CD4-positive, alpha-beta T cell (primary cell): ENCODE measurements at regions of chr17 and their contacts with region 1.

Region 1: DNA sequence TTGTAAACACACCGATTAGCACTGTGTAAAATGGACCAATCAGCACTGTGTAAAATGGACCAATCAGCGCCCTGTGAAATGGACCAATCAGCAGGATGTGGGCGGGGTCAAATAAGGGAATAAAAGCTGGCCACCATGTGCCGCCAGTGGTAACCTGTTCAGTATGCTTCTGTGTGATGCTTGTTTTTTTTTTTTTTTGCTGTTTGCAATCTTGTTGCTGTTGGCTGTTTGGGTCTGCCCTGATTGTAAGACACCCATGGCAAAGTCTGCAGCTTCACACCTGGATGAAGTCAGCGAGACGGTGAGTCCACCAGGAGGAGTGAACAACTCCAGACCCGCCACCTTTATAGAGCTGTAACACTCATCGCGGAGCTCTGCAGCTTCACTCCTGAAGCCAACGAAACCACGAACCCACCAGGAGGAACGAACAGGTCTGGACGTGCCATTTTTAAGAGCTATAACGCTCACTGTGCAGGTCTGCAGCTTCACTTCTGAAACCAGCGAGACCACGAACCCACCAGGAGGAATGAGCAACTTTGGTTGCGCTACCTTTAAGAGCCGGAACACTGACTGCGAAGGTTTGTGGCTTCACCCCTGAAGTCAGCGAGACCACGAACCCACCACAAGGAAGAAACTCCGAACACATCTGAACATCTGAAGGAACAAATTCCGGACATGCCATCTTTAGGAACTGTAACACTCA is 85.0 kb upstream of the MED9 start:
- DNase-seq: peak; percentile 37 to 89 (median 60)
- ATAC-seq: peak; percentile 88
- H3K4me3 ChIP-seq: peak overlapping the region; percentile 63
- H3K4me3 Mint-ChIP-seq: peak overlapping the region; percentile 91
- H3K27ac ChIP-seq: peak overlapping the region; percentile 25 to 40
- H3K27ac Mint-ChIP-seq: peak overlapping the region; percentile 87
- H3K4me1 ChIP-seq: peaks cover 21% of the 10 kb centered on the region
- H3K4me1 Mint-ChIP-seq: peaks cover 26% of the 10 kb centered on the region
- H3K27me3 ChIP-seq: no peaks in the 10 kb centered on the region
- H3K27me3 Mint-ChIP-seq: no peaks in the 10 kb centered on the region
- CTCF ChIP-seq: no peak

Region 2: GRCh38 chr17:17403899-17404576 is 12.2 kb after region 1 on chr17:
- CTCF ChIA-PET with region 1: no interaction called
- POLR2A ChIA-PET with region 1: interaction called, 25 read pairs
- intact Hi-C with region 1: no loop called
- DNase-seq: peak; percentile 22 to 80 (median 63)
- ATAC-seq: peak; percentile 98
- H3K4me3 ChIP-seq: peak overlapping the region; percentile 22
- H3K4me3 Mint-ChIP-seq: peak overlapping the region; percentile 63
- H3K27ac ChIP-seq: peak overlapping the region; percentile 70 to 77
- H3K27ac Mint-ChIP-seq: peak overlapping the region; percentile 88
- H3K4me1 ChIP-seq: peaks cover 49% of the 10 kb centered on the region
- H3K4me1 Mint-ChIP-seq: peaks cover 90% of the 10 kb centered on the region
- H3K27me3 ChIP-seq: no peaks in the 10 kb centered on the region
- H3K27me3 Mint-ChIP-seq: no peaks in the 10 kb centered on the region
- CTCF ChIP-seq: no peak

Region 3: GRCh38 chr17:17440010-17440843 is 48.4 kb after region 1 on chr17:
- CTCF ChIA-PET with region 1: no interaction called
- POLR2A ChIA-PET with region 1: no interaction called
- intact Hi-C with region 1: loop called in 1 of 2 experiments (anchors 5 kb)
- DNase-seq: peak; percentile 58 to 88 (median 73)
- ATAC-seq: peak; percentile 67
- H3K4me3 ChIP-seq: no peak overlapping the region
- H3K4me3 Mint-ChIP-seq: no peak overlapping the region
- H3K27ac ChIP-seq: no peak overlapping the region
- H3K27ac Mint-ChIP-seq: no peak overlapping the region
- H3K4me1 ChIP-seq: peaks cover 6% of the 10 kb centered on the region
- H3K4me1 Mint-ChIP-seq: peaks cover 11% of the 10 kb centered on the region
- H3K27me3 ChIP-seq: no peaks in the 10 kb centered on the region
- H3K27me3 Mint-ChIP-seq: no peaks in the 10 kb centered on the region
- CTCF ChIP-seq: peak; percentile 83

Region 4: GRCh38 chr17:17476865-17477467 is 85.1 kb after region 1 on chr17 and contains the start of gene MED9:
- CTCF ChIA-PET with region 1: no interaction called
- POLR2A ChIA-PET with region 1: no interaction called
- intact Hi-C with region 1: no loop called
- DNase-seq: peak; percentile 92 to 98 (median 94)
- ATAC-seq: peak; percentile 98
- H3K4me3 ChIP-seq: peak within 1 kb of the TSS; percentile 82
- H3K4me3 Mint-ChIP-seq: peak within 1 kb of the TSS; percentile 91
- H3K27ac ChIP-seq: peak within 1 kb of the TSS; percentile 42 to 58
- H3K27ac Mint-ChIP-seq: peak within 1 kb of the TSS; percentile 87
- H3K4me1 ChIP-seq: peaks cover 42% of the 10 kb centered on the region
- H3K4me1 Mint-ChIP-seq: peaks cover 51% of the 10 kb centered on the region
- H3K27me3 ChIP-seq: peaks cover 0 to 2% of the 10 kb centered on the region in 2 experiments
- H3K27me3 Mint-ChIP-seq: peaks cover 6% of the 10 kb centered on the region
- CTCF ChIP-seq: no peak
- total RNA-seq, gene MED9: 27.0 to 27.9 TPM

Region 5: GRCh38 chr17:17757391-17757791 is 365.6 kb after region 1 on chr17:
- CTCF ChIA-PET with region 1: no interaction called
- POLR2A ChIA-PET with region 1: no interaction called
- intact Hi-C with region 1: no loop called
- DNase-seq: peak in 9 of 14 experiments; percentile 19 to 65 (median 50)
- ATAC-seq: peak; percentile 67
- H3K4me3 ChIP-seq: peak overlapping the region; percentile 16
- H3K4me3 Mint-ChIP-seq: peak overlapping the region; percentile 84
- H3K27ac ChIP-seq: peak overlapping the region; percentile 22 to 51
- H3K27ac Mint-ChIP-seq: peak overlapping the region; percentile 91
- H3K4me1 ChIP-seq: peaks cover 65% of the 10 kb centered on the region
- H3K4me1 Mint-ChIP-seq: peaks cover 68% of the 10 kb centered on the region
- H3K27me3 ChIP-seq: no peaks in the 10 kb centered on the region
- H3K27me3 Mint-ChIP-seq: no peaks in the 10 kb centered on the region
- CTCF ChIP-seq: no peak